Activated T-helper 1 cell treated with anti-CD3 and anti-CD28 coated beads, Interleukin-12 subunit alpha, Interleukin-12 subunit beta, Interleukin-2, Interleukin-4 antibody, amounts not matched to agents 30 ng/mL and 10 ng/mL and 1 ng/mL, durations not matched to agents 14 hours and 24 hours and 36 hours (primary cell): ENCODE measurements at regions of chr10 and their contacts with region 1.

Region 1: GRCh38 chr10:98028168-98028770 is 2.2 kb downstream of the CRTAC1 start:
- DNase-seq: peak; percentile 27
- H3K4me3 Mint-ChIP-seq: no peak overlapping the region
- H3K27ac Mint-ChIP-seq: no peak overlapping the region
- H3K4me1 Mint-ChIP-seq: no peaks in the 10 kb centered on the region
- H3K27me3 Mint-ChIP-seq: peaks cover 39% of the 10 kb centered on the region

Region 2: DNA sequence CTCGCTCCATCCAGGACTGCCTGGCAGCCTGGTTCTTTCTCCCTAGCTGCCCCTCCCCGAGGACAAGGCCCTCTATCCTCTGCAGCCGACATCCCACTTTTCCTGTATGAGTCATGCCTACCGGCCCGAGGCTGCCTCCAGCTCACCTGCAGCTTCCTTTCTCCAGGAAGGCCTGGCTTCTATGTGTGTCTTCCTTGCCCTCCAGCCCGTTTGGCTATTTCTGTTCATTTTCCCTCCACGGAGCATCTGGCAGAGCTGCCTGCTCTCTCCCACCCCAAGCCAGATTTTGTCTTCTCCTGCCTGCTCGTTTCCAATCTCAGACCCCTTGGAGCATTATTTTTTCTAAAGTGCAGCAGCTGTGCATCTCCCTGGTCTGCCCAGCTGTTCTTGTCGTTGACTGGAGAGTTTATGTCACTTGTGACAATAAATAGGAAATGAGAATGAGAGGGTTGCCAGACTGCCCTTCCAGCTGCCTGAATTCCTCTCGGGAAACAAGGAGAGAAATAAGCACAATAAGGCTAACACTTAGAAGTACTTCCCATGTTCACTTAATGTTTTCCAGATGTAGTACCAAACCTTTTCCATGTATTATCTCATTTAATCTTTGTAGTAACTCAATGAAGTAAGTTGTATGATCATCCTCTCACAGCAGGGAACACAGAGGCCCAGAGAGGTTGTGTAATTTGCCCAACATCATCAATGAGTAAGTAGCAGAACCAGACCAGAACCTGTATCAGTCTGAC is 509.8 kb before region 1 on chr10:
- intact Hi-C with region 1: no loop called
- DNase-seq: no peak
- H3K4me3 Mint-ChIP-seq: no peak overlapping the region
- H3K27ac Mint-ChIP-seq: no peak overlapping the region
- H3K4me1 Mint-ChIP-seq: no peaks in the 10 kb centered on the region
- H3K27me3 Mint-ChIP-seq: peaks cover 19% of the 10 kb centered on the region

Region 3: DNA sequence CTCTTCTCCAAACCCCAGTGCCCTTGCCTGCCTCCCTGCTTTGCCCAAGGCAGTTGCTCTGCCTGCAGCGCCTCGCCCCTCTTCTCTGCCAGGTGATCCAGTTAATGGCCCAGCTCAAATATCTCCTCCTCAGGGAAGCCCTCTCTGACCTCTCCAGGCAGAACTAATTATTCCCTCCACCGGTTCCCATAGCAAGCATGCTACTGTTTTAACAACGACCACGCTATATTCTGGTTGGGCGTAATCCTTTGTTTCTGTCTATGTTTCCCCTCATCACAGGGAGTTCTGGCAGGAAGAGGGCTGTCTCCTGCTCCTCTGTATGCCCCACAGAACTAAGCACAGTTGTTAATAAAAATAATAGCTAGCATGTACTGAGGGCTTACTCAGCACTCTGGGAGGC is 69.3 kb after region 1 on chr10:
- intact Hi-C with region 1: no loop called
- DNase-seq: no peak
- H3K4me3 Mint-ChIP-seq: no peak overlapping the region
- H3K27ac Mint-ChIP-seq: no peak overlapping the region
- H3K4me1 Mint-ChIP-seq: no peaks in the 10 kb centered on the region
- H3K27me3 Mint-ChIP-seq: no peaks in the 10 kb centered on the region

Region 4: GRCh38 chr10:99532687-99533495 is 1504.6 kb after region 1 on chr10 and contains the start of gene NKX2-3:
- intact Hi-C with region 1: loop called (anchors 10 kb)
- DNase-seq: peak; percentile 6
- H3K4me3 Mint-ChIP-seq: peak within 1 kb of the TSS; percentile 22
- H3K27ac Mint-ChIP-seq: peak within 1 kb of the TSS; percentile 73
- H3K4me1 Mint-ChIP-seq: peaks cover 47% of the 10 kb centered on the region
- H3K27me3 Mint-ChIP-seq: peaks cover 87% of the 10 kb centered on the region
- total RNA-seq, gene NKX2-3: not detected in 2 replicates